HepG2 (cell line): ENCODE measurements at regions of chr14 and their contacts with region 1.

Region 1: GRCh38 chr14:103385152-103385993 is at the start of gene MARK3:
- DNase-seq: peak; percentile 92
- ATAC-seq: peak; percentile 97
- H3K4me3 ChIP-seq: peak within 1 kb of the TSS; percentile 92 to 98 (median 93)
- H3K27ac ChIP-seq: peak within 1 kb of the TSS; percentile 88
- H3K4me1 ChIP-seq: peaks cover 28% of the 10 kb centered on the region
- H3K27me3 ChIP-seq: peaks cover 1 to 4% of the 10 kb centered on the region in 2 experiments; a peak in 2 of 5 replicates
- CTCF ChIP-seq: peak; percentile 37
- EP300 ChIP-seq: peak in 1 of 2 experiments; percentile 66; a peak in 2 of 4 replicates
- POLR2A ChIP-seq: peak; percentile 60 to 85; a peak in 3 of 4 replicates
- RAD21 ChIP-seq: no peak
- total RNA-seq, gene MARK3: 41.4 and 56.6 TPM in 2 replicates

Region 2: GRCh38 chr14:103346286-103346685 is 39.1 kb before region 1 on chr14:
- CTCF ChIA-PET with region 1: no interaction called
- POLR2A ChIA-PET with region 1: interaction called, 4 read pairs
- in situ Hi-C with region 1: no loop called
- intact Hi-C with region 1: loop called (anchors 5 kb)
- DNase-seq: no peak
- ATAC-seq: no peak
- H3K4me3 ChIP-seq: no peak overlapping the region
- H3K27ac ChIP-seq: no peak overlapping the region
- H3K4me1 ChIP-seq: peaks cover 38% of the 10 kb centered on the region
- H3K27me3 ChIP-seq: no peaks in the 10 kb centered on the region
- CTCF ChIP-seq: no peak
- EP300 ChIP-seq: no peak
- POLR2A ChIP-seq: peak in 1 of 2 experiments; percentile 11; a peak in 1 of 4 replicates
- RAD21 ChIP-seq: no peak

Region 3: GRCh38 chr14:103427485-103428443 is 42.4 kb after region 1 on chr14:
- CTCF ChIA-PET with region 1: no interaction called
- POLR2A ChIA-PET with region 1: no interaction called
- in situ Hi-C with region 1: no loop called
- intact Hi-C with region 1: no loop called
- DNase-seq: no peak
- ATAC-seq: no peak
- H3K4me3 ChIP-seq: no peak overlapping the region
- H3K27ac ChIP-seq: no peak overlapping the region
- H3K4me1 ChIP-seq: no peaks in the 10 kb centered on the region
- H3K27me3 ChIP-seq: no peaks in the 10 kb centered on the region
- CTCF ChIP-seq: no peak
- EP300 ChIP-seq: no peak
- POLR2A ChIP-seq: no peak
- RAD21 ChIP-seq: no peak

Region 4: GRCh38 chr14:103463149-103463548 is 77.8 kb after region 1 on chr14:
- CTCF ChIA-PET with region 1: no interaction called
- POLR2A ChIA-PET with region 1: no interaction called
- in situ Hi-C with region 1: no loop called
- intact Hi-C with region 1: no loop called
- DNase-seq: no peak
- ATAC-seq: no peak
- H3K4me3 ChIP-seq: no peak overlapping the region
- H3K27ac ChIP-seq: no peak overlapping the region
- H3K4me1 ChIP-seq: no peaks in the 10 kb centered on the region
- H3K27me3 ChIP-seq: no peaks in the 10 kb centered on the region
- CTCF ChIP-seq: no peak
- EP300 ChIP-seq: no peak
- POLR2A ChIP-seq: no peak
- RAD21 ChIP-seq: no peak